Heart left ventricle (tissue), 16 donors: ENCODE measurements at regions of chr19 and their contacts with region 1.

Region 1: DNA sequence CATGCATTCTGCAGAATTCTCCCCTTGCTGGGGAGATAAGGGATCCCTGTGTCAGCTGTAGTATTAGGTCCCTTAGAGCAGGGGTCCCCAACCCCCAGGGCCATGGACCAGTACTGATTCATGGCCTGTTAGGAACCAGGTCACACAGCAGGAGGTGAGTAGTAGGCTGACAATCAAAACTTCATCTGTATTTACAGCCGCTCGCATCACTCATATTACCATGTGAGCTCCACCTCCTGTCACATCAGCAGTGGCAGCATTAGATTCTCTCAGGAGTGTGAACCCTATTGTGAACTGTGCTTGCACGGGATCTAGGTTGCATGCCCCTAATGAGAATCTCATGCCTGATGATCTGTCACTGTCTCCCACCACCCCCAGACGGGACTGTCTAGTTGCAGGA is 37.9 kb downstream of the CPAMD8 start:
- DNase-seq: no peak
- ATAC-seq: no peak
- H3K4me3 ChIP-seq: no peak overlapping the region
- H3K27ac ChIP-seq: no peak overlapping the region
- H3K4me1 ChIP-seq: peaks cover 0 to 9% (median 0%) of the 10 kb centered on the region in 12 donors
- H3K27me3 ChIP-seq: peaks cover 0 to 3% (median 0%) of the 10 kb centered on the region in 9 donors
- CTCF ChIP-seq: no peak
- POLR2A ChIP-seq: no peak

Region 2: GRCh38 chr19:16957151-16957701 is 31.4 kb before region 1 on chr19:
- intact Hi-C with region 1: no loop called
- DNase-seq: no peak
- ATAC-seq: peak in 3 of 4 donors; percentile 20 to 56 (median 41)
- H3K4me3 ChIP-seq: no peak overlapping the region
- H3K27ac ChIP-seq: peak overlapping the region in 2 of 12 donors; percentile 7 to 58
- H3K4me1 ChIP-seq: peaks cover 0 to 21% (median 8%) of the 10 kb centered on the region in 12 donors
- H3K27me3 ChIP-seq: peaks cover 0 to 4% (median 0%) of the 10 kb centered on the region in 9 donors
- CTCF ChIP-seq: no peak
- POLR2A ChIP-seq: no peak

Region 3: GRCh38 chr19:17041976-17042375 is 53.3 kb after region 1 on chr19:
- intact Hi-C with region 1: loop called in 1 of 10 experiments (anchors 1 kb)
- DNase-seq: peak in 4 of 5 donors; percentile 56 to 66 (median 65)
- ATAC-seq: peak; percentile 78 to 95 (median 82)
- H3K4me3 ChIP-seq: no peak overlapping the region
- H3K27ac ChIP-seq: peak overlapping the region in 10 of 12 donors; percentile 22 to 83 (median 64)
- H3K4me1 ChIP-seq: peaks cover 0 to 13% (median 0%) of the 10 kb centered on the region in 12 donors
- H3K27me3 ChIP-seq: no peaks in the 10 kb centered on the region
- CTCF ChIP-seq: no peak
- POLR2A ChIP-seq: no peak